Activated CD4-positive, alpha-beta memory T cell treated with anti-CD3 and anti-CD28 coated beads, Interleukin-2, amount 10 ng/mL, durations not matched to agents 7 days and 5 days (primary cell): ENCODE measurements at regions of chr14 and their contacts with region 1.

Region 1: GRCh38 chr14:49867831-49868723 is 15.5 kb upstream of the NEMF start:
- DNase-seq: peak; percentile 99
- H3K4me3 Mint-ChIP-seq: peak overlapping the region; percentile 90
- H3K27ac Mint-ChIP-seq: peak overlapping the region; percentile 98
- H3K4me1 Mint-ChIP-seq: peaks cover 26% of the 10 kb centered on the region
- H3K27me3 Mint-ChIP-seq: no peaks in the 10 kb centered on the region

Region 2: DNA sequence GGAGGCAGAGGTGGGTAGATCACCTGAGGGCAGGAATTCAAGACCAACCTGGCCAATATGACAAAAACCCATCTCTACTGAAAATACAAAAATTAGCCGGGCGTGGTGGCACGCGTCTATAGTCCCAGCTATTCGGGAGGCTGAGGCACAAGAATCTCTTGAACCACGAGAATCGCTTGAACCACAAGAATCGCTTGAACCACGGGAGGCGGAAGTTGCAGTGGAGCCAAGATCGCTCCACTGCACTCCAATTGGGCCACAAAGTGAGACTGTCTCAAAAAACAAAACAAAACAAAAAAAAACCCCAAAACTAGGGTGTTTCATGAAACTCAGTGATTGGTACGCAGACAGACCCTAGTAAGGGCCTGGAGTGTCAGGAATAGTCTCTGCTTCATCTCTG is 18.4 kb after region 1 on chr14:
- CTCF ChIA-PET with region 1: interaction called, 35 read pairs
- POLR2A ChIA-PET with region 1: interaction called, 162 read pairs
- DNase-seq: peak; percentile 32
- H3K4me3 Mint-ChIP-seq: peak overlapping the region; percentile 9
- H3K27ac Mint-ChIP-seq: peak overlapping the region; percentile 59
- H3K4me1 Mint-ChIP-seq: peaks cover 35% of the 10 kb centered on the region
- H3K27me3 Mint-ChIP-seq: no peaks in the 10 kb centered on the region

Region 3: GRCh38 chr14:50045039-50045711 is 177.1 kb after region 1 on chr14:
- CTCF ChIA-PET with region 1: interaction called, 24 read pairs
- POLR2A ChIA-PET with region 1: interaction called, 88 read pairs
- DNase-seq: peak; percentile 89
- H3K4me3 Mint-ChIP-seq: peak overlapping the region; percentile 6
- H3K27ac Mint-ChIP-seq: peak overlapping the region; percentile 92
- H3K4me1 Mint-ChIP-seq: peaks cover 70% of the 10 kb centered on the region
- H3K27me3 Mint-ChIP-seq: no peaks in the 10 kb centered on the region

Region 4: DNA sequence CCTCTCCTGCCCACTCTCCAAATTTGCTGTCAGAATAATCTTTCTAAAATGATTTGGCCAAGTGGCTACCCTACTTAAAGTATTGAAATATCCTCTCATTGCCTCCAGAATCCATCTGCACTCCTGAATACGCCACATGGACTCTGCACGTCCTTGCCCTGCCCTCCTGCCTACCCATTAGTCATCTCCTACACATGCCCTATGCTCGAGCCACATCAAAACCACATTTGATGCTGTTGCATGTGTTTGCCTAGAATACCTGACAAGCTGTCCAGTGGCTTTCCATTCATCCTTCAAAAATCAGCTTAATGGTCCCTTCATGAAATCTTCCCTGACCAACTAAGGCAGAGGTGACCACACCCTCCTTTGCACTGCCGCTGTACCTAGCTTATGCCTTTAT is 231.3 kb after region 1 on chr14:
- CTCF ChIA-PET with region 1: interaction called, 31 read pairs
- POLR2A ChIA-PET with region 1: interaction called, 30 read pairs
- DNase-seq: no peak
- H3K4me3 Mint-ChIP-seq: no peak overlapping the region
- H3K27ac Mint-ChIP-seq: no peak overlapping the region
- H3K4me1 Mint-ChIP-seq: peaks cover 46% of the 10 kb centered on the region
- H3K27me3 Mint-ChIP-seq: peaks cover 8% of the 10 kb centered on the region